H1 (cell line): ENCODE measurements at regions of chr1 and their contacts with region 1.

Region 1: GRCh38 chr1:74689621-74690363 is 16.2 kb upstream of the ERICH3 start:
- DNase-seq: peak in 1 of 2 experiments; percentile 57
- H3K4me3 ChIP-seq: no peak overlapping the region
- H3K27ac ChIP-seq: no peak overlapping the region
- H3K4me1 ChIP-seq: no peaks in the 10 kb centered on the region; a peak in 2 of 7 replicates
- H3K27me3 ChIP-seq: no peaks in the 10 kb centered on the region
- CTCF ChIP-seq: peak in 2 of 3 experiments; percentile 58 to 81; a peak in 3 of 4 replicates
- EP300 ChIP-seq: no peak
- POLR2A ChIP-seq: no peak
- RAD21 ChIP-seq: peak; percentile 92 to 93

Region 2: GRCh38 chr1:74468982-74469603 is 220.7 kb before region 1 on chr1:
- CTCF ChIA-PET with region 1: interaction called, 13 read pairs
- POLR2A ChIA-PET with region 1: no interaction called
- DNase-seq: no peak
- H3K4me3 ChIP-seq: no peak overlapping the region
- H3K27ac ChIP-seq: no peak overlapping the region
- H3K4me1 ChIP-seq: peaks cover 0 to 5% (median 0%) of the 10 kb centered on the region in 4 experiments; a peak in 2 of 7 replicates
- H3K27me3 ChIP-seq: no peaks in the 10 kb centered on the region
- CTCF ChIP-seq: peak in 2 of 3 experiments; percentile 47 to 51; a peak in 2 of 4 replicates
- EP300 ChIP-seq: no peak
- POLR2A ChIP-seq: no peak
- RAD21 ChIP-seq: peak; percentile 72 to 74

Region 3: GRCh38 chr1:74673351-74674111 is 16.3 kb before region 1 on chr1 and contains the start of gene ERICH3:
- CTCF ChIA-PET with region 1: interaction called, 23 read pairs
- POLR2A ChIA-PET with region 1: no interaction called
- DNase-seq: peak in 1 of 2 experiments; percentile 62
- H3K4me3 ChIP-seq: peak within 1 kb of the TSS; percentile 46 to 73 (median 50)
- H3K27ac ChIP-seq: no peak within 1 kb of the TSS
- H3K4me1 ChIP-seq: peaks cover 0 to 9% (median 6%) of the 10 kb centered on the region in 4 experiments; a peak in 5 of 7 replicates
- H3K27me3 ChIP-seq: peaks cover 0 to 22% (median 7%) of the 10 kb centered on the region in 4 experiments; a peak in 6 of 7 replicates
- CTCF ChIP-seq: no peak
- EP300 ChIP-seq: no peak
- POLR2A ChIP-seq: no peak
- RAD21 ChIP-seq: no peak
- total RNA-seq, gene ERICH3: not detected in 2 replicates

Region 4: DNA sequence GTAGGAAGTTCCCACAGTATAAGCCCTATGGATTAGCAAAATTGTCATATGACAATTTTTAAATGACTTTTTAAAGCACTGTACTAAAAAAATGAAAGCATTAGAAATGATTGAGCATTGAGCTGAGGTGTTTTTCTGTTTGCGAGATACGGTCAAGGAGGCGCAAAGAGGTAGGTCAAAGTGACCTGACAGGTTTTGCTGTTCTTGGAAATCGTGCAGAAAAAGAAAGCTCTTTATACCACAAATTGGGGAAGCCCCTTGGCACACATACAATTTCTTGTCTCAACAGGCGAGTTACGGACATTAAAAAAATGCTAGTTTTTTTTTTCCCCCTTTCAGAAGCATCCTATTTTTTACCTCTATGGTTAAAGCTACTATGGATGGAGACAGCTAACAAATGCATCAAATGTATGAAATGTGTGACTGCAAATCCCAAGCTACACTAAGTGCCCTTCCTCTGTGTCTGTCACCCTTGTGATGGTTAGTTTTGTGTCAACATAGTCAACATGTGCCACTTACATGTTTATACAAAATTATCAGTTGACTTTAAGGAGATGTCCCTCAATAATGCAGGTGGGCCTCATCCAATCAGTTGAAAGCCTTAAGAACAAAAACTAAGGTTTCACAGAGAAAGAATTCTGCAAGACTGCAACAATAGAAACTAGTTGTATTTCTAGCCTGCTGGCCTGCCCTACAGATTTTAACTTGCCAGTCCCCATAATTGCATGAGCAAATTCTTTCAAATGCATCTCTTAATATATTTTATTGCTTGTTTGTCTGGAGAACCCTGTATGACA is 13.8 kb after region 1 on chr1:
- CTCF ChIA-PET with region 1: interaction called, 12 read pairs
- POLR2A ChIA-PET with region 1: no interaction called
- DNase-seq: no peak
- H3K4me3 ChIP-seq: no peak overlapping the region
- H3K27ac ChIP-seq: no peak overlapping the region
- H3K4me1 ChIP-seq: no peaks in the 10 kb centered on the region
- H3K27me3 ChIP-seq: no peaks in the 10 kb centered on the region
- CTCF ChIP-seq: no peak
- EP300 ChIP-seq: no peak
- POLR2A ChIP-seq: no peak
- RAD21 ChIP-seq: no peak

Region 5: GRCh38 chr1:74733604-74734484 is 44.1 kb after region 1 on chr1:
- CTCF ChIA-PET with region 1: interaction called, 12 read pairs
- POLR2A ChIA-PET with region 1: interaction called, 4 read pairs
- DNase-seq: no peak
- H3K4me3 ChIP-seq: peak overlapping the region; percentile 81 to 96 (median 84)
- H3K27ac ChIP-seq: peak overlapping the region; percentile 99; the same call in 1 of the 2 replicates
- H3K4me1 ChIP-seq: peaks cover 0 to 2% (median 0%) of the 10 kb centered on the region in 4 experiments; a peak in 2 of 7 replicates
- H3K27me3 ChIP-seq: no peaks in the 10 kb centered on the region; a peak in 1 of 7 replicates
- CTCF ChIP-seq: peak in 2 of 3 experiments; percentile 68 to 83; a peak in 3 of 4 replicates
- EP300 ChIP-seq: no peak
- POLR2A ChIP-seq: no peak
- RAD21 ChIP-seq: peak; percentile 55 to 70

Region 6: GRCh38 chr1:74842726-74843125 is 152.9 kb after region 1 on chr1:
- CTCF ChIA-PET with region 1: no interaction called
- POLR2A ChIA-PET with region 1: no interaction called
- DNase-seq: no peak
- H3K4me3 ChIP-seq: no peak overlapping the region
- H3K27ac ChIP-seq: no peak overlapping the region
- H3K4me1 ChIP-seq: no peaks in the 10 kb centered on the region
- H3K27me3 ChIP-seq: no peaks in the 10 kb centered on the region
- CTCF ChIP-seq: no peak
- EP300 ChIP-seq: no peak
- POLR2A ChIP-seq: no peak
- RAD21 ChIP-seq: no peak